ENCODE measurements at regions of chr11 and their contacts with region 1.

Region 1: GRCh38 chr11:22875869-22876473 is 15.7 kb upstream of the CCDC179 start:
- DNase-seq: peak; percentile 11
- H3K4me3 ChIP-seq: no peak overlapping the region
- H3K27me3 ChIP-seq: no peaks in the 10 kb centered on the region
- CTCF ChIP-seq: peak; percentile 71

Region 2: DNA sequence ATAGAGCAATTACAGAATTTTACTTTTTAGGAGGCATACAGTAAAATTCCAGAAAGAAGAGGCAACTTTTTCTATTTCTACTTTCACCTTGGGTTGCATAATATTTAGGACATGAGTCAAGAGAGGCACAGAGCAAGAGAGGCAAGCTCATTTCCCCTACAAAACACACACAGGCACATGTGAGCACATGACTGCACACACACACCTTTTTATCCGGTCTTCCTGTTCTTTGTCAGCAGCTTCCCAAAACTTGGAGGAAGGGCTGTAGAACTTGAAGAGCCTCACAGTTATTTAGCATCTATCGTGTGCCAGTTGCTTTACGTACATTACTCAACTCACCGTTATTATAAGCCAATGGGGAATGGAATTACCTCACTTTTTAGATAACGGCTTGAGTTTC is 22.1 kb after region 1 on chr11:
- CTCF ChIA-PET with region 1: interaction called, 10 read pairs
- POLR2A ChIA-PET with region 1: no interaction called
- DNase-seq: no peak
- H3K4me3 ChIP-seq: no peak overlapping the region
- H3K27me3 ChIP-seq: no peaks in the 10 kb centered on the region
- CTCF ChIP-seq: no peak